GM12878 (cell line): ENCODE measurements at regions of chr14 and their contacts with region 1.

Region 1: GRCh38 chr14:90256354-90257131 is at the start of gene PSMC1:
- DNase-seq: peak; percentile 68
- ATAC-seq: peak; percentile 99
- H3K4me3 ChIP-seq: peak within 1 kb of the TSS; percentile 87
- H3K27ac ChIP-seq: peak within 1 kb of the TSS; percentile 87
- H3K4me1 ChIP-seq: no peaks in the 10 kb centered on the region
- H3K27me3 ChIP-seq: no peaks in the 10 kb centered on the region
- CTCF ChIP-seq: no peak
- EP300 ChIP-seq: no peak
- POLR2A ChIP-seq: peak; percentile 92
- RAD21 ChIP-seq: no peak
- polyA plus RNA-seq, gene PSMC1: 194 to 255 TPM

Region 2: GRCh38 chr14:89813617-89814031 is 442.9 kb before region 1 on chr14:
- CTCF ChIA-PET with region 1: no interaction called
- POLR2A ChIA-PET with region 1: no interaction called
- RAD21 ChIA-PET with region 1: no interaction called
- SMC1A ChIA-PET with region 1: no interaction called
- in situ Hi-C with region 1: no loop called
- intact Hi-C with region 1: no loop called
- DNase-seq: no peak
- ATAC-seq: no peak
- H3K4me3 ChIP-seq: no peak overlapping the region
- H3K27ac ChIP-seq: no peak overlapping the region
- H3K4me1 ChIP-seq: no peaks in the 10 kb centered on the region
- H3K27me3 ChIP-seq: no peaks in the 10 kb centered on the region
- CTCF ChIP-seq: no peak
- EP300 ChIP-seq: no peak
- POLR2A ChIP-seq: no peak
- RAD21 ChIP-seq: no peak

Region 3: DNA sequence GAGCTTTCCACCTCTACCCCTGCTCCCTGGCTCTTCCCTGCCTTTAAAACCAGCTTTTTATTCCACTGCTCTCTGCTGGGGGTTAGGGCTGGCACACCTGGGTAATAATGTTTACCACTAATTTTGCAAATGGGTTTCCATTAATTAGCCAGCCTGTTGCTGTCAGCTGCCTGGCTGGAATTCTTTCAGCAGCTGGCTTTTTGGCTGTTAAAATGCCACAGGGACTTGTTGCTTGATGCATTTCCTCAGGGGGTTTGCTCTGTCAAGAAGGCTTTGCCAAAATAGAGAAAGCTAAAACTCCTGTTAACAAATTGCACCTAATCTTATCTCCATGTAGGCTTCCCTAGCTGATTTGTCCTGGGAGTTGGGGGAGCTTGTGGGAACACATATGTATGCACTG is 52.0 kb before region 1 on chr14:
- CTCF ChIA-PET with region 1: no interaction called
- POLR2A ChIA-PET with region 1: no interaction called
- RAD21 ChIA-PET with region 1: no interaction called
- SMC1A ChIA-PET with region 1: no interaction called
- in situ Hi-C with region 1: no loop called
- intact Hi-C with region 1: no loop called
- DNase-seq: no peak
- ATAC-seq: no peak
- H3K4me3 ChIP-seq: no peak overlapping the region
- H3K27ac ChIP-seq: no peak overlapping the region
- H3K4me1 ChIP-seq: no peaks in the 10 kb centered on the region
- H3K27me3 ChIP-seq: no peaks in the 10 kb centered on the region
- CTCF ChIP-seq: no peak
- EP300 ChIP-seq: no peak
- POLR2A ChIP-seq: no peak
- RAD21 ChIP-seq: no peak

Region 4: DNA sequence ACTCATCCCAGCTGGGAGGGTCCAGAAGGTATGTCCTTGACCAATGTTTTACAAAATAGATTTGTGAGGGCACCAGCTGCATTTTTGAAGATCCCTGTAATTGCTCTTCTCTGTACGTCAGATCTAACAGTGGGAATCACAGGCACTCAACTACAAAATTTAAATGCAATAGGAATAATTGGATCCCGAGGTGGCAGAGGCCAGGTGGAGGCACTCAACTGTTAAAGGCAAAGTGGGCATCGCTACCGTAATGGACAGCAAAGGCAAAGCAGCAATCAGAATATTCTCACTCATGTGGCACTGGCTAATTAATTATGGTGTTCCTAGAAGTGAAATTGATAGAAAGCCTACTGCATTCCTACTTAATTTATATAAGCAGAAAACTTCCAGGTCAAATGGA is 28.1 kb before region 1 on chr14:
- CTCF ChIA-PET with region 1: no interaction called
- POLR2A ChIA-PET with region 1: no interaction called
- RAD21 ChIA-PET with region 1: no interaction called
- SMC1A ChIA-PET with region 1: no interaction called
- in situ Hi-C with region 1: no loop called
- intact Hi-C with region 1: no loop called
- DNase-seq: no peak
- ATAC-seq: no peak
- H3K4me3 ChIP-seq: no peak overlapping the region
- H3K27ac ChIP-seq: no peak overlapping the region
- H3K4me1 ChIP-seq: no peaks in the 10 kb centered on the region
- H3K27me3 ChIP-seq: no peaks in the 10 kb centered on the region
- CTCF ChIP-seq: no peak
- EP300 ChIP-seq: no peak
- POLR2A ChIP-seq: no peak
- RAD21 ChIP-seq: no peak

Region 5: GRCh38 chr14:90383075-90383730 is 126.7 kb after region 1 on chr14:
- CTCF ChIA-PET with region 1: no interaction called
- POLR2A ChIA-PET with region 1: no interaction called
- RAD21 ChIA-PET with region 1: no interaction called
- SMC1A ChIA-PET with region 1: no interaction called
- in situ Hi-C with region 1: no loop called
- intact Hi-C with region 1: loop called (anchors 5 kb)
- DNase-seq: peak; percentile 98
- ATAC-seq: peak; percentile 96
- H3K4me3 ChIP-seq: peak overlapping the region; percentile 82
- H3K27ac ChIP-seq: peak overlapping the region; percentile 98
- H3K4me1 ChIP-seq: peaks cover 7% of the 10 kb centered on the region
- H3K27me3 ChIP-seq: no peaks in the 10 kb centered on the region
- CTCF ChIP-seq: no peak
- EP300 ChIP-seq: no peak
- POLR2A ChIP-seq: peak; percentile 91
- RAD21 ChIP-seq: no peak